ENCODE measurements at regions of chr6 and their contacts with region 1.

Region 1: GRCh38 chr6:118985123-118985830 is 50.3 kb upstream of the MCM9 start:
- DNase-seq: no peak
- ATAC-seq: no peak
- H3K4me3 ChIP-seq: no peak overlapping the region
- H3K4me3 Mint-ChIP-seq: no peak overlapping the region
- H3K27ac ChIP-seq: no peak overlapping the region
- H3K27ac Mint-ChIP-seq: no peak overlapping the region
- H3K4me1 ChIP-seq: no peaks in the 10 kb centered on the region
- H3K4me1 Mint-ChIP-seq: no peaks in the 10 kb centered on the region
- H3K27me3 ChIP-seq: no peaks in the 10 kb centered on the region
- H3K27me3 Mint-ChIP-seq: no peaks in the 10 kb centered on the region
- CTCF ChIP-seq: no peak

Region 2: GRCh38 chr6:118551063-118552053 is 433.9 kb before region 1 on chr6:
- CTCF ChIA-PET with region 1: no interaction called
- POLR2A ChIA-PET with region 1: no interaction called
- intact Hi-C with region 1: no loop called
- DNase-seq: peak; percentile 44
- ATAC-seq: no peak
- H3K4me3 ChIP-seq: no peak overlapping the region
- H3K4me3 Mint-ChIP-seq: no peak overlapping the region
- H3K27ac ChIP-seq: no peak overlapping the region
- H3K27ac Mint-ChIP-seq: no peak overlapping the region
- H3K4me1 ChIP-seq: no peaks in the 10 kb centered on the region
- H3K4me1 Mint-ChIP-seq: no peaks in the 10 kb centered on the region
- H3K27me3 ChIP-seq: no peaks in the 10 kb centered on the region
- H3K27me3 Mint-ChIP-seq: no peaks in the 10 kb centered on the region
- CTCF ChIP-seq: peak; percentile 69

Region 3: GRCh38 chr6:120378582-120379220 is 1393.4 kb after region 1 on chr6:
- CTCF ChIA-PET with region 1: no interaction called
- POLR2A ChIA-PET with region 1: no interaction called
- intact Hi-C with region 1: loop called (anchors 5 kb)
- DNase-seq: peak; percentile 50
- ATAC-seq: no peak
- H3K4me3 ChIP-seq: no peak overlapping the region
- H3K4me3 Mint-ChIP-seq: no peak overlapping the region
- H3K27ac ChIP-seq: no peak overlapping the region
- H3K27ac Mint-ChIP-seq: no peak overlapping the region
- H3K4me1 ChIP-seq: no peaks in the 10 kb centered on the region
- H3K4me1 Mint-ChIP-seq: no peaks in the 10 kb centered on the region
- H3K27me3 ChIP-seq: no peaks in the 10 kb centered on the region
- H3K27me3 Mint-ChIP-seq: no peaks in the 10 kb centered on the region
- CTCF ChIP-seq: peak; percentile 79